Transverse colon (tissue), 4 donors: ENCODE measurements at regions of chr1 and their contacts with region 1.

Region 1: GRCh38 chr1:153677718-153678505 is 576 bp upstream of the NPR1 start:
- DNase-seq: peak; percentile 54
- H3K4me3 ChIP-seq: peak overlapping the region in 3 of 4 donors; percentile 16 to 53 (median 44)
- H3K27ac ChIP-seq: peak overlapping the region; percentile 12 to 64 (median 39)
- H3K4me1 ChIP-seq: peaks cover 10 to 27% (median 20%) of the 10 kb centered on the region in 4 donors
- H3K27me3 ChIP-seq: peaks cover 49% of the 10 kb centered on the region
- CTCF ChIP-seq: peak; percentile 73 to 86 (median 84)
- EP300 ChIP-seq: no peak
- POLR2A ChIP-seq: no peak

Region 2: DNA sequence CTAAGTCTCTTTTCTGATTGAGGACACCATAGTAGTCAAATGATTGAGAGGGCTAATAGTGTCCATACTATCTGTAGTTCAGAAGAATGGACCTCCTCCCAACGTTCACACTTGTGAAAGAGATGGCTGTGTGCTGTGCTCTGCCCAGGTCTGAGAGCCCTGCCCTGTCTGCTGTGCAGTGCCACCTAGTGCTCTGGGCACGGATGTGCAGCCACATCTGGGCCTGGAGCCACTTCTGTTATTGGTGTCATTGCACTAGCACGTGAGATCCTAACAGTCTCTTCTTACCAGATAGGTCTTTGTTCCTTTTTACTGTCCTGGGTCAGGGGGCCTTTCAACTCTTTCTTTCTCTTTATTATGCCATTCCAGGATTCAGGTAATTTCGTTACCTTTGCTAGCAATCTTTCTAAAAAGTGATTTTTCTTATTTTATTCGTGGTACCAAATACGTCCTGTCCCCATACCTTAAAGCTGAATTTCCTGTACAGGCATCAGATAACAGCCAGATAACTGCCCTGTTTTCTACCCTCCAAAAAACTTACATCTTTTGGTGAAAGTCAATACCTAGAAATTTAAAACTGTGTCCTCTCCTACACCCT is 71.6 kb after region 1 on chr1:
- in situ Hi-C with region 1: loop called in 1 of 4 experiments (anchors 10 kb)
- intact Hi-C with region 1: loop called (anchors 2 kb)
- DNase-seq: peak; percentile 89
- H3K4me3 ChIP-seq: no peak overlapping the region
- H3K27ac ChIP-seq: peak overlapping the region in 3 of 4 donors; percentile 15 to 50 (median 36)
- H3K4me1 ChIP-seq: peaks cover 9 to 34% (median 15%) of the 10 kb centered on the region in 4 donors
- H3K27me3 ChIP-seq: no peaks in the 10 kb centered on the region
- CTCF ChIP-seq: peak; percentile 87 to 92 (median 90)
- EP300 ChIP-seq: no peak
- POLR2A ChIP-seq: no peak

Region 3: DNA sequence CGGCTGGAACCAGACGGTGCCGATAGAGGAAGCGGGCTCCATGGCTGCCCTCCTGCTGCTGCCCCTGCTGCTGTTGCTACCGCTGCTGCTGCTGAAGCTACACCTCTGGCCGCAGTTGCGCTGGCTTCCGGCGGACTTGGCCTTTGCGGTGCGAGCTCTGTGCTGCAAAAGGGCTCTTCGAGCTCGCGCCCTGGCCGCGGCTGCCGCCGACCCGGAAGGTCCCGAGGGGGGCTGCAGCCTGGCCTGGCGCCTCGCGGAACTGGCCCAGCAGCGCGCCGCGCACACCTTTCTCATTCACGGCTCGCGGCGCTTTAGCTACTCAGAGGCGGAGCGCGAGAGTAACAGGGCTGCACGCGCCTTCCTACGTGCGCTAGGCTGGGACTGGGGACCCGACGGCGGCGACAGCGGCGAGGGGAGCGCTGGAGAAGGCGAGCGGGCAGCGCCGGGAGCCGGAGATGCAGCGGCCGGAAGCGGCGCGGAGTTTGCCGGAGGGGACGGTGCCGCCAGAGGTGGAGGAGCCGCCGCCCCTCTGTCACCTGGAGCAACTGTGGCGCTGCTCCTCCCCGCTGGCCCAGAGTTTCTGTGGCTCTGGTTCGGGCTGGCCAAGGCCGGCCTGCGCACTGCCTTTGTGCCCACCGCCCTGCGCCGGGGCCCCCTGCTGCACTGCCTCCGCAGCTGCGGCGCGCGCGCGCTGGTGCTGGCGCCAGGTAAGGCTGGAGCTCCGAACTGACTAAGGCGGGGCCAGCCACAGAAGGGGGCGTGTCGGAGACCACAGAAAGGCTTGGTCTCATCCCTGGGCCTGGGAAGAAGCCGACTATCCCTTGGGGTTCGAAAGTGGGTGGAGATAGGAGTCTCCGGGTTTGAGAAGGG is 97.8 kb after region 1 on chr1:
- in situ Hi-C with region 1: loop called in 1 of 4 experiments (anchors 10 kb)
- intact Hi-C with region 1: loop called (anchors 1 kb)
- DNase-seq: peak; percentile 81
- H3K4me3 ChIP-seq: peak overlapping the region; percentile 51 to 92 (median 86)
- H3K27ac ChIP-seq: peak overlapping the region; percentile 86 to 97 (median 92)
- H3K4me1 ChIP-seq: peaks cover 12 to 32% (median 22%) of the 10 kb centered on the region in 4 donors
- H3K27me3 ChIP-seq: no peaks in the 10 kb centered on the region
- CTCF ChIP-seq: peak in 2 of 5 experiments; percentile 22 to 26
- EP300 ChIP-seq: no peak
- POLR2A ChIP-seq: peak; percentile 43